CD8-positive, alpha-beta T cell (primary cell): ENCODE measurements at regions of chr1 and their contacts with region 1.

Region 1: DNA sequence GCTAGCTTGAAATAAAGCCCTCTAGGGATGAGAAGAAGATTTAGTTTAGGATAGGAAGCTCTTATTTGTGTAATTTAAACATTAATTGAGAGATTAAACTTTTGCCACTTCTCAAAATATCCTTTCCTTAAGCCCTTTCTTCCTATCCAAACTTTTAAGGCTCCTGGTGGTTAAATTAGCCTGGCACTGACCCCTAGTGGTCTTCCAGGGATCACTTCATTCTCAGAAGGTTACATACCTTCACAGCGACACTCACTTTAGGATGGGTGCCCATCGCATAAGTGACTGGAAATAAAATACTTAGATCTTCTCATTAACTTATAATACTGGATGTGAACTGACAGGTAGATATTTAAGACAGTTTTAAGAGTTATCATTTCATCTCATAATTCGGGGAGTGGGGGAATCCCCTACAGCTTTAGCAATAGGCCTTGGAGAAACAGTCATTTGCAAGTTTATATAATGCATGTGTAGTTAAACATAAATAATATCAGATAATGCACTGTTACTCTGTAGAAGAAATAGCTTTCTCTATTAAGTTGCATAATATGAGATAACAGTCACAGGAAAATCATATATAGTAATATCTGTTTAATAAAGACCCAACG is 7.4 kb downstream of the LHX9 start:
- DNase-seq: peak in 3 of 9 experiments; percentile 40 to 72 (median 63)
- ATAC-seq: peak; percentile 64
- H3K4me3 ChIP-seq: no peak overlapping the region
- H3K4me3 Mint-ChIP-seq: no peak overlapping the region
- H3K27ac ChIP-seq: no peak overlapping the region
- H3K27ac Mint-ChIP-seq: no peak overlapping the region
- H3K4me1 ChIP-seq: peaks cover 11% of the 10 kb centered on the region
- H3K4me1 Mint-ChIP-seq: peaks cover 20% of the 10 kb centered on the region
- H3K27me3 ChIP-seq: peaks cover 30 to 37% of the 10 kb centered on the region in 2 experiments
- H3K27me3 Mint-ChIP-seq: peaks cover 63% of the 10 kb centered on the region
- CTCF ChIP-seq: peak; percentile 75

Region 2: DNA sequence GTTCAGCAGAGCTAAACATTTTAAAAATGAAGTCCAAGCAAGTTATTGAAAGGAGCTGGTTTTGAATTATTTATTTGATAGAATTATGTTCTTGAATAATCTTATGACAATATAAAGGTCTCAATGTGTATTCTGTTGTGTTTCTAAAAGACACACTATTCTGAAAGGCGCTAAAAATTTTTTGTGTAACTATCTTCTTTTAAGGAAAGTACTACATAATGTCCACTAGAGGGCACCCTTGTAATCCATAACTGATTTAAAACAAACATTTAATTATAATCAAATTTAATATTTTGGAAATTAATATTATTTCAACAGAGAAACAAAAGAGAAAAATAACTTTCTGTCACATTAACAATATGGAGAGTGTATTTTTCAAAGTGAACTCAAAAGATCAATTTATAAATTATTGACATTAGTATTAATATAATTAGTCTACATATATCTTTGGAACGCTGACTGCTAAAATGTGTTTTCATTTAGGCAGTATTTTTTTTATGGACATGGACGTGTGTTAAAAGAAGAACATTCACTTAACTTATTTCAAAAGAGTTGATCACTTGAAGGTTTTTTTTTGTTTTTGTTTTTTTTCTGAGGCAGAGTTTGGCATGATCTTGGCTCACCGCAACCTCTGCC is 397.8 kb before region 1 on chr1:
- CTCF ChIA-PET with region 1: interaction called, 10 read pairs
- POLR2A ChIA-PET with region 1: no interaction called
- intact Hi-C with region 1: loop called (anchors 1 kb)
- DNase-seq: peak in 2 of 9 experiments; percentile 41 to 60
- ATAC-seq: no peak
- H3K4me3 ChIP-seq: no peak overlapping the region
- H3K4me3 Mint-ChIP-seq: no peak overlapping the region
- H3K27ac ChIP-seq: no peak overlapping the region
- H3K27ac Mint-ChIP-seq: no peak overlapping the region
- H3K4me1 ChIP-seq: no peaks in the 10 kb centered on the region
- H3K4me1 Mint-ChIP-seq: no peaks in the 10 kb centered on the region
- H3K27me3 ChIP-seq: no peaks in the 10 kb centered on the region
- H3K27me3 Mint-ChIP-seq: no peaks in the 10 kb centered on the region
- CTCF ChIP-seq: peak; percentile 97

Region 3: GRCh38 chr1:197775282-197776262 is 149.0 kb before region 1 on chr1 and contains the start of gene DENND1B:
- CTCF ChIA-PET with region 1: no interaction called
- POLR2A ChIA-PET with region 1: no interaction called
- intact Hi-C with region 1: loop called in 1 of 2 experiments (anchors 5 kb)
- DNase-seq: peak; percentile 56 to 90 (median 83)
- ATAC-seq: peak; percentile 55
- H3K4me3 ChIP-seq: peak within 1 kb of the TSS; percentile 62 to 71
- H3K4me3 Mint-ChIP-seq: peak within 1 kb of the TSS; percentile 83
- H3K27ac ChIP-seq: peak within 1 kb of the TSS; percentile 61 to 88
- H3K27ac Mint-ChIP-seq: peak within 1 kb of the TSS; percentile 97
- H3K4me1 ChIP-seq: peaks cover 33% of the 10 kb centered on the region
- H3K4me1 Mint-ChIP-seq: peaks cover 66% of the 10 kb centered on the region
- H3K27me3 ChIP-seq: no peaks in the 10 kb centered on the region
- H3K27me3 Mint-ChIP-seq: no peaks in the 10 kb centered on the region
- CTCF ChIP-seq: no peak
- total RNA-seq, gene DENND1B: 17.6 to 19.6 TPM

Region 4: GRCh38 chr1:198072177-198072576 is 147.6 kb after region 1 on chr1:
- CTCF ChIA-PET with region 1: no interaction called
- POLR2A ChIA-PET with region 1: no interaction called
- intact Hi-C with region 1: no loop called
- DNase-seq: no peak
- ATAC-seq: no peak
- H3K4me3 ChIP-seq: no peak overlapping the region
- H3K4me3 Mint-ChIP-seq: no peak overlapping the region
- H3K27ac ChIP-seq: no peak overlapping the region
- H3K27ac Mint-ChIP-seq: no peak overlapping the region
- H3K4me1 ChIP-seq: no peaks in the 10 kb centered on the region
- H3K4me1 Mint-ChIP-seq: no peaks in the 10 kb centered on the region
- H3K27me3 ChIP-seq: peaks cover 0 to 4% of the 10 kb centered on the region in 2 experiments
- H3K27me3 Mint-ChIP-seq: peaks cover 8% of the 10 kb centered on the region
- CTCF ChIP-seq: no peak

Region 5: GRCh38 chr1:198465201-198466144 is 540.9 kb after region 1 on chr1:
- CTCF ChIA-PET with region 1: no interaction called
- POLR2A ChIA-PET with region 1: no interaction called
- intact Hi-C with region 1: loop called in 1 of 2 experiments (anchors 10 kb)
- DNase-seq: peak in 2 of 9 experiments; percentile 52 to 64
- ATAC-seq: peak; percentile 58
- H3K4me3 ChIP-seq: no peak overlapping the region
- H3K4me3 Mint-ChIP-seq: no peak overlapping the region
- H3K27ac ChIP-seq: no peak overlapping the region
- H3K27ac Mint-ChIP-seq: no peak overlapping the region
- H3K4me1 ChIP-seq: no peaks in the 10 kb centered on the region
- H3K4me1 Mint-ChIP-seq: peaks cover 3% of the 10 kb centered on the region
- H3K27me3 ChIP-seq: no peaks in the 10 kb centered on the region
- H3K27me3 Mint-ChIP-seq: no peaks in the 10 kb centered on the region
- CTCF ChIP-seq: peak; percentile 75